ENCODE measurements at regions of chr14 and their contacts with region 1.

Region 1: GRCh38 chr14:76876076-76876475 is 49.9 kb downstream of the LRRC74A start:
- DNase-seq: peak in 8 of 9 experiments; percentile 24 to 68 (median 51)
- ATAC-seq: peak; percentile 69
- H3K4me3 ChIP-seq: no peak overlapping the region
- H3K4me3 Mint-ChIP-seq: no peak overlapping the region
- H3K27ac ChIP-seq: no peak overlapping the region
- H3K27ac Mint-ChIP-seq: no peak overlapping the region
- H3K4me1 ChIP-seq: no peaks in the 10 kb centered on the region
- H3K4me1 Mint-ChIP-seq: no peaks in the 10 kb centered on the region
- H3K27me3 ChIP-seq: no peaks in the 10 kb centered on the region
- H3K27me3 Mint-ChIP-seq: no peaks in the 10 kb centered on the region
- CTCF ChIP-seq: peak; percentile 76

Region 2: DNA sequence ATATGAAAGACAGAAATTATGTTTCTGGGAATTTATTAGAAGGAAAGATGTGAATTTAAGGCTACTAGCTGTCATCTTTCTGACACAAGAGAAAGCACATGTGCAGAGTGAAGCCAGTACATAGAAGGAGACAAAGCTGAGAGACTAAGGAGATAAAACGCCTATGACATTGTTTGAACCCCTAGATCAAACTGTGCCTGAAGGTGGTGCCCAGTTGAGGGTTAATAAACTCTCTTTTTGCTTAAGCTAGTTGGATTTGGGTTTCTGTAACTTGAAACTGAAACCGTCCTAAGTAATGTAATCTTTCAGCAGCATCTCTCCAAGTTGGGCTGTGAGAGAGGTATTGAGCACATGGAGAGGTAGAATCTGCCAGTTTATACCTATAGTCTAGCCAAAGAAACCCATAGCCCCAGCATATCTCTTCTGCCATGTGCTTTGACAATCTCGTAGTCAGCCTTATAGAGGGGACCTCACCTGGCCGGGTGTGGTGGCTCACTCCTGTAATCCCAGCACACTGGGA is 34.4 kb after region 1 on chr14:
- CTCF ChIA-PET with region 1: interaction called, 38 read pairs
- POLR2A ChIA-PET with region 1: no interaction called
- intact Hi-C with region 1: loop called (anchors 1 kb)
- DNase-seq: no peak
- ATAC-seq: no peak
- H3K4me3 ChIP-seq: no peak overlapping the region
- H3K4me3 Mint-ChIP-seq: no peak overlapping the region
- H3K27ac ChIP-seq: no peak overlapping the region
- H3K27ac Mint-ChIP-seq: no peak overlapping the region
- H3K4me1 ChIP-seq: peaks cover 25% of the 10 kb centered on the region
- H3K4me1 Mint-ChIP-seq: peaks cover 25% of the 10 kb centered on the region
- H3K27me3 ChIP-seq: no peaks in the 10 kb centered on the region
- H3K27me3 Mint-ChIP-seq: no peaks in the 10 kb centered on the region
- CTCF ChIP-seq: no peak

Region 3: GRCh38 chr14:76956316-76957090 is 80.4 kb after region 1 on chr14:
- CTCF ChIA-PET with region 1: interaction called, 9 read pairs
- POLR2A ChIA-PET with region 1: no interaction called
- intact Hi-C with region 1: loop called in 1 of 2 experiments (anchors 5 kb)
- DNase-seq: peak; percentile 70 to 95 (median 85)
- ATAC-seq: peak; percentile 63
- H3K4me3 ChIP-seq: peak overlapping the region; percentile 62 to 74
- H3K4me3 Mint-ChIP-seq: peak overlapping the region; percentile 84
- H3K27ac ChIP-seq: peak overlapping the region; percentile 93 to 95
- H3K27ac Mint-ChIP-seq: peak overlapping the region; percentile 97
- H3K4me1 ChIP-seq: peaks cover 52% of the 10 kb centered on the region
- H3K4me1 Mint-ChIP-seq: peaks cover 61% of the 10 kb centered on the region
- H3K27me3 ChIP-seq: no peaks in the 10 kb centered on the region
- H3K27me3 Mint-ChIP-seq: no peaks in the 10 kb centered on the region
- CTCF ChIP-seq: no peak

Region 4: DNA sequence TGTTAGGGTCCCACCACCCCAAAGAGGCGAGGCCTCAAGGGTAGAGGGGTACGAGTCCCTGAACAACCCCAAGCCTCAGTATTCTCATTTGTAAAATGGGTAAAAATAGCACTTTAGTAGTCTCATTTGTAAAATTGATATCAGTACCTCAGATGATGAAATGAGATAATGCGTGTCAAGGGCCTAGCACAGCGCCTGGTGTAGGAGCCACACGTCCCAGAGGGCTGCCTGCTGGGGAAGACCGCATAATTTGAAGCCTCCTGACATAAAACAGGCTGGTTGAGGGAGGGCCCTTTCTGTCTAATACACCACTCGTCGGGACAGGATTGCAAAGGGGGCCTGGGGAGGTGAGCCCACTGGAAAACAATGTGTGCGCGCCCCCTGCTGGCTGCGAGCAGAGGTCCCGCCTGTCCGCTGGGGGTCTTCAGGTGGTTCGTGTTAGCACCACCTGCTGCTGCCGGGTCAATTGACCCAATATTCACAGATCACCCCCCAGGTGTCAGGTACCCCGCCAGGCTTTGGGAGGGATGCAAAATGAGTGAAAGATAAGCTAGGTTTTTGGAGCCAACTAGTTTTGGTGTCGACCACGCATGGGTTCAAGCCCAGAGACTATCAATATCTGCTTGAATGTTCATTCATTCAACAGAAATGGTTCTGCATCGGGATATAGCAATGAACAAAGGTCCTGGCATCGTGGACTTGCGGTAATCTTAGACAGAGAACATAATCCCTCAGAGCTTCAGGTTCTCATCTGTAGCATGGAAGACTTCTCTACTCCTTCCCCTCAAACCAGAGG is 177.2 kb after region 1 on chr14:
- CTCF ChIA-PET with region 1: interaction called, 127 read pairs
- POLR2A ChIA-PET with region 1: no interaction called
- intact Hi-C with region 1: loop called (anchors 1 kb)
- DNase-seq: peak; percentile 51 to 89 (median 82)
- ATAC-seq: peak; percentile 90
- H3K4me3 ChIP-seq: no peak overlapping the region
- H3K4me3 Mint-ChIP-seq: no peak overlapping the region
- H3K27ac ChIP-seq: no peak overlapping the region
- H3K27ac Mint-ChIP-seq: peak overlapping the region; percentile 22
- H3K4me1 ChIP-seq: peaks cover 10% of the 10 kb centered on the region
- H3K4me1 Mint-ChIP-seq: peaks cover 6% of the 10 kb centered on the region
- H3K27me3 ChIP-seq: no peaks in the 10 kb centered on the region
- H3K27me3 Mint-ChIP-seq: no peaks in the 10 kb centered on the region
- CTCF ChIP-seq: peak; percentile 98

Region 5: DNA sequence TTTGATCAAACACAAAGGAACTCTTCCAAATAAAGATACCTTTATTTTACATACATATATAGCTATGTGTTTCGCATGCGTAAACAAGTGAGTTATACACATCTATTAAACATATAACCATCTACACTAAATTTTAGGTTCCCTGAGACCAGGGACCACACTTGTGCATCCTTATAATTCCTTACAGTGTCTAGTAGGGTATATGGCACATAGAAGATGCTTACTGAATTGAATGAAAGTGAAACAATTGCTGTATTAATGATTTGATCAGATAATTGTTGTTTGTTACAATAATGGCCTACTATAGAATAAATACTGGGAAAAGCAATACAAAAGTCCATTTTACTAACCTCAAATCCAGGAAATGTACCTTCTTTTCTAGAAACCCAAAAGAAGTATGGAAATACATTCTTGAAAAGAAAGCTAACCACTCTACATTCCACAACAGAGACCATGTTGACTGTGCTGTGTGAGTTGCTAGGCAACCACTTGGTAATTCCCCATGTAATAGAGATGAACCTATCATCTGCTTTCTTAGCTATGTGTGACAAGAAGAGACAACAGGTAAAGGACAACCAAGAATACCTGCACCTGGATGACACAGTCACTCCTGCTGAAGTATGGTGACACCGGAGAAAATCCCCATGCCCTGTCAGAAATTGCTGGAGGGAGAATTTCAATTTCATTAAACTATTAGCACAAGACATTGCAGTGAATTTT is 210.1 kb after region 1 on chr14:
- CTCF ChIA-PET with region 1: interaction called, 10 read pairs
- POLR2A ChIA-PET with region 1: no interaction called
- intact Hi-C with region 1: no loop called
- DNase-seq: peak in 2 of 9 experiments; percentile 44 to 57
- ATAC-seq: peak; percentile 48
- H3K4me3 ChIP-seq: no peak overlapping the region
- H3K4me3 Mint-ChIP-seq: no peak overlapping the region
- H3K27ac ChIP-seq: no peak overlapping the region
- H3K27ac Mint-ChIP-seq: no peak overlapping the region
- H3K4me1 ChIP-seq: peaks cover 6% of the 10 kb centered on the region
- H3K4me1 Mint-ChIP-seq: peaks cover 4% of the 10 kb centered on the region
- H3K27me3 ChIP-seq: peaks cover 0 to 3% of the 10 kb centered on the region in 2 experiments
- H3K27me3 Mint-ChIP-seq: peaks cover 4% of the 10 kb centered on the region
- CTCF ChIP-seq: no peak

Region 6: DNA sequence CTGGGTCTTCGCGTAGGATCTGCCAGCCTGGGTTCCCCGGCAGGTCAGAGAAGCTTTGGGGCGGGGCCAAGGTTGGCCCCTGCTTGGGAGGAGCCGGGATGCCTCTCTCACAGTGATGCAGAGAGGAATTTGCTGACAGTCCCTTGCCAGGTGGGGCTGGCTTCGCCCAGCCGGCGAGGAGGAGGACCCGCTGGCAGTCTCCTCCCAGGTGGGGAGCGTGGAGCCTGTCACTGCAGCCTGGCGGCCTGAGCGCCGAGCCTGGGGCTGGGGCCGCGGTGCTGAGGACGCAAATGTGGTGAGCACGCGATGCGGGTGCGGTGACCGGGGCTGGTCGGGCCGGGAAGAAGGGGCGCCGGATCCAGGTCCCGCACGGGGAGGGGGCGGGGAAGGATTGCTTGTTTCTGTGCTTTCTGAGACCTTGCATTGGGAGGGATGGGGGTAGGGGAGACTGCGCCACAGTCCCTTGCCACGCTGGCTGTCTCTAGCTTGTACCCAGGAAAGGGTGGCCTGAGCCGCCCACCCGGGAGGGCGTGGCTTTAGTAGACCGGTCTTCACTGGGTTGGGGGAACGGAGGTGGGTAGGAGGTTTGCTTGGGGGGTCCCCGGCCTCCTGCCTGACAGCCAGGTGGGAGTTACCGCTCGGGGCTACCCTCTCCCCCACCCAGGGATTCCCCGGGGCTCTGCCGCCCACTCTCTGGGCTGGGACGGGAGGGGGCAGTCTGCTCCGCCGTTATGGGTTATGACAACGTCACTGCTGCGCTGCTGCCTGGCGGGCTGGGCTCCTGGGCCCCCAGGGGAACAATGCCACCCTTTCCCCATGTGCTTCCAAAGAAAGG is 305.7 kb after region 1 on chr14 and contains the start of gene TMEM63C:
- CTCF ChIA-PET with region 1: no interaction called
- POLR2A ChIA-PET with region 1: no interaction called
- intact Hi-C with region 1: no loop called
- DNase-seq: peak; percentile 5 to 80 (median 51)
- ATAC-seq: peak; percentile 78
- H3K4me3 ChIP-seq: peak within 1 kb of the TSS; percentile 57 to 65
- H3K4me3 Mint-ChIP-seq: peak within 1 kb of the TSS; percentile 80
- H3K27ac ChIP-seq: peak within 1 kb of the TSS in 1 of 2 experiments; percentile 31
- H3K27ac Mint-ChIP-seq: no peak within 1 kb of the TSS
- H3K4me1 ChIP-seq: peaks cover 11% of the 10 kb centered on the region
- H3K4me1 Mint-ChIP-seq: peaks cover 11% of the 10 kb centered on the region
- H3K27me3 ChIP-seq: no peaks in the 10 kb centered on the region
- H3K27me3 Mint-ChIP-seq: peaks cover 29% of the 10 kb centered on the region
- CTCF ChIP-seq: no peak
- total RNA-seq, gene TMEM63C: 0.47 to 0.71 TPM

Region 7: DNA sequence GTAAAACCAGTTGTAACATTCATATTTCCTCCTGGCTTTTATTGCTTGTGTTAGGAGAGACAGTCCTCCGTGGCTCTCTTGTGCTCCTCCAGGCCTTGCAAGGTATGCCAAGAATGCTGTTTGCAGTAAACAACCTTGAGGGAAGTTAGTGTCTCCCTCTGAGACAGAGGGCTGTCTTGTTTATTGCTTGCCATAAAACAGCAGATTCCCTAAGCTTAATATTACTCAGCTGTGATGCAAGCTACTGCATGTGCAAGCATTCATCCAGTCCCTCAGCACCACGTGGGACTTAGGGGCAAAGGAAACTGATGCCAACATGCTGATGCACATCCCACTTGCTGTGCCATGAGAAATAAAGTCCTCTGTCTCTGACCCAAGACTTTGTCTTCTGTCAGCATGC is 438.0 kb after region 1 on chr14:
- CTCF ChIA-PET with region 1: interaction called, 12 read pairs
- POLR2A ChIA-PET with region 1: no interaction called
- intact Hi-C with region 1: loop called in 1 of 2 experiments (anchors 2 kb)
- DNase-seq: no peak
- ATAC-seq: no peak
- H3K4me3 ChIP-seq: no peak overlapping the region
- H3K4me3 Mint-ChIP-seq: no peak overlapping the region
- H3K27ac ChIP-seq: no peak overlapping the region
- H3K27ac Mint-ChIP-seq: no peak overlapping the region
- H3K4me1 ChIP-seq: no peaks in the 10 kb centered on the region
- H3K4me1 Mint-ChIP-seq: peaks cover 6% of the 10 kb centered on the region
- H3K27me3 ChIP-seq: no peaks in the 10 kb centered on the region
- H3K27me3 Mint-ChIP-seq: no peaks in the 10 kb centered on the region
- CTCF ChIP-seq: no peak

Region 8: DNA sequence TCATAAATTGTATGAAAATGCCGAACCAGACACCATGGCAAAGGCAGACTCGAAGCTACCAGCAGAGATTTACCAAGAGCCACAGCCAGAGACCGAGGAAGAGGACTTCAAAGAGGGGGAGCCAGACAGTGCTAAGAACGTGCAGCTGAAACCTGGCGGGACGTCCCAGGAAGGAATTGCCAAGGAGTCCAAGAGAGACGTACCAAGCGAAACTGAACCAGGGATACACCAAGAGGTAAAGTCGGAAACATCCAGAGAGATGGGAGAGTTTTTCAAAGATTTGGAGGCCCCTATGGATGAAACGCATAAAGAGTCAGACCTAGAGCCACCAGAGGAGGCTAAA is 501.4 kb after region 1 on chr14:
- CTCF ChIA-PET with region 1: no interaction called
- POLR2A ChIA-PET with region 1: no interaction called
- intact Hi-C with region 1: no loop called
- DNase-seq: no peak
- ATAC-seq: peak; percentile 7
- H3K4me3 ChIP-seq: peak overlapping the region; percentile 74 to 96
- H3K4me3 Mint-ChIP-seq: no peak overlapping the region
- H3K27ac ChIP-seq: peak overlapping the region; percentile 62 to 91
- H3K27ac Mint-ChIP-seq: no peak overlapping the region
- H3K4me1 ChIP-seq: peaks cover 17% of the 10 kb centered on the region
- H3K4me1 Mint-ChIP-seq: peaks cover 36% of the 10 kb centered on the region
- H3K27me3 ChIP-seq: no peaks in the 10 kb centered on the region
- H3K27me3 Mint-ChIP-seq: no peaks in the 10 kb centered on the region
- CTCF ChIP-seq: no peak